ENCODE measurements at regions of chr1 and their contacts with region 1.

Region 1: GRCh38 chr1:30823969-30824735 is 66.6 kb upstream of the LAPTM5 start:
- DNase-seq: peak; percentile 96

Region 2: DNA sequence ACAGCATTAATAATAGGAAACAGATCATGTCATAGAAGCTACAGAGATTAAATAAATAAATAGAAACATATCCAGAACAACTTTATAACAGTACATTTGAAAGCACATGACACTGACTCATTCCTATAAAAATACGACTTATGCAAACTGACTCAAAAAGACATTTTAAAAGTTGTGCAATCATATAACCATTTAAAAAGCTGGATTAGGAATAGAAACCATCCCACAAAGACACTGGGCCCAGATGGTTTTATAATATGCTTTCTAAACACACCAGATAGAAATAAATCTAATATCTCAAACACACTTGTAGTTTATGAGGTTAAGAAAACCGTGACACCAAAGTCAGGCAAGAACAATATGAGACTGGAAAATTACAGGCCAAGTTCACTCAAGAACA is 148.4 kb before region 1 on chr1:
- intact Hi-C with region 1: no loop called
- DNase-seq: no peak

Region 3: DNA sequence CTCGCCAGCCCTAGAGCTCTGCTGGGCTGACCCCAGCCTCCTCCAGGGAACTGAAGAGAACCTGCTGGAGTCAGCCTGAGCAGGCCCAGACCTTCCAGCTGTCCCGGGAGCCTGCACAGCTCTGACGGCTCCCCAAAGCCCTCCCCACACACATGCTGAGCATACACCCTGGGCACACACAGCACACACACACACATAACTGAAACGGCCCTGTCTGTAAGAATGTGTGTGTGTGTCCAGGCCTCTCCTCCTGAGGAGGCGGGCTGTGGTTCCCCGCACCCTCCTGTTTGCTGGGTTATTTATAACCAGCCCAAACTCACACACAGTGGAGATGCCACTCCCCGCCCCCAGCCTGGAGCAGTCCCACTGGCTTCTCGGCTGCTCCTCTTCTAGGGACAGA is 64.2 kb after region 1 on chr1:
- intact Hi-C with region 1: loop called (anchors 5 kb)
- DNase-seq: peak; percentile 86